Activated T-helper 1 cell treated with anti-CD3 and anti-CD28 coated beads, Interleukin-12 subunit alpha, Interleukin-12 subunit beta, Interleukin-2, Interleukin-4 antibody, amounts not matched to agents 30 ng/mL and 10 ng/mL and 1 ng/mL, durations not matched to agents 14 hours and 24 hours and 36 hours (primary cell): ENCODE measurements at regions of chr1 and their contacts with region 1.

Region 1: GRCh38 chr1:58783993-58784757 is at the start of gene JUN:
- DNase-seq: peak; percentile 98
- H3K4me3 Mint-ChIP-seq: peak within 1 kb of the TSS; percentile 96
- H3K27ac Mint-ChIP-seq: peak within 1 kb of the TSS; percentile 96
- H3K4me1 Mint-ChIP-seq: peaks cover 34% of the 10 kb centered on the region
- H3K27me3 Mint-ChIP-seq: peaks cover 4% of the 10 kb centered on the region
- total RNA-seq, gene JUN: 68.5 and 71.6 TPM in 2 replicates

Region 2: DNA sequence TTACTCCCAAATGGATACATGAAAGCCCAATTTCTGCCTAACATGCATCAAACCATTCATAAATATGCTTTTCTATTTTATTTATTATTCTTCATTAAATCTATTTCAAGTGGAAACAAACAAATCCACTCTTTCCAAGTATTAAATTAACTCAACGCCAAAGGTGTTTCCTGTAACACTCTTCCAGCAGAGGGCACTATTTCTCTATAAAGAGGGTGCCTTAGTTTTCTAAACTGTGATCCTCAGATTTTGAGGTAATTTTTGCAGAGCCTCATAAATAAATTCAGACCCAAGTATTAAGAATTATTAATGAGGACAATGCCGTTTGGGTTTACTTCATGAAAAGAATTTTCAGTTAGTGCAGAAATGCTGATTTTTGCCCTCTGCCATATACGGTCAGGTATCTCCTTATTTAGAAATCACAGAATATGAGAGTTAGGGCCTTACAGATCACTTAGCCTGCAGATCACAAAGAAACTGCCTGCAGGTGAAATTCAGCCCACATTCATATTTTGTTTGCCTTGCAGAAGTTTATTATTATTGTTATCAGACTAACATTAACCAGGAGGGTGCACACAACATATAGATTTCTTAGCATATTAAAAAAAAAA is 44.2 kb before region 1 on chr1:
- intact Hi-C with region 1: loop called (anchors 1 kb)
- DNase-seq: no peak
- H3K4me3 Mint-ChIP-seq: no peak overlapping the region
- H3K27ac Mint-ChIP-seq: no peak overlapping the region
- H3K4me1 Mint-ChIP-seq: peaks cover 18% of the 10 kb centered on the region
- H3K27me3 Mint-ChIP-seq: peaks cover 7% of the 10 kb centered on the region

Region 3: DNA sequence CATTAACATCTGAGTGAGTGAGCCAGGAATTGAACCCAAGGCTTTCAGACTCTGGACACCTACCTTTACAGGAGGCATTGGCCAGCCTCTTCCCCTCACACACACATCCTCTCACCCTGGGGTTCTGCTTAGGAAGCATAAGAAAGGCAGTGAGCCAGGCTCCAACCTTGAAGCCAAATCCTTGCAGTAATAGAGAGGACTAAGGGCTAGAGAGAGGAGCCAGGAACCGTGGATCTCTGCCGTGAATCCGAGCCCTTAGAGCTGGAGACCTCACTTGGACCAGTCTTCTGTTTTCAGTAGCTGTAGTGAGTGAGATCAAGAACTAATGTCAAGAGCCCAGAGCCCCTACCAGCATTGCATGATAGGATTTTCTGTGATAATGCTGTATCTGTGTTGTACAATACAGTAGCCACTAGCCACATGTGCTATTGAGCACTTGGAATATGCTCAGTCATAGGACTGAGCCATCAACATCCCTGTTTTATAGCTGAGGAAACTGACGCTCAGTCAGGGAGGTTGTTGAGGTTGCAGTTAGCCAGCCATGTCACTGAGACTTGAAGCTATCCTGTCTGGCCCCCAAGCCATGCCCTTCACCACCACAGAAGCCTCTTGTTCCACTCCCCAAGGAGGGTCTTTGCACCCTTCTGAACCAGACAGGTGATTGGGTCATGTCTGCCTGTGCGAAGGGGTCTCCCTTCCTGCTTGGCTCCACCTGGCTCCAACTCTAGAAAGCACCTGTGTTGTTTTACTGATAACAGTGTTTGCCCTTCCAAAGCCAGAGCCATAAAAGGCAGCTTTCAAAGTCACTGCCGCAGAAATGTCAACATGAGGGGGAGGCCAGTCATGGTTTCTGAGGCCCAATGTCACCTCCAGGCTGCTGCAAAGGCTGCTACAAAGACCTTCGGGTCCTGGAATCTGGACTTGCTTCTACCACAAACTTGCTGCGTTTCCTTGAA is 100.8 kb after region 1 on chr1:
- intact Hi-C with region 1: loop called (anchors 5 kb)
- DNase-seq: peak; percentile 3
- H3K4me3 Mint-ChIP-seq: peak overlapping the region; percentile 65
- H3K27ac Mint-ChIP-seq: peak overlapping the region; percentile 78
- H3K4me1 Mint-ChIP-seq: peaks cover 70% of the 10 kb centered on the region
- H3K27me3 Mint-ChIP-seq: peaks cover 5% of the 10 kb centered on the region

Region 4: GRCh38 chr1:59020151-59020997 is 236.2 kb after region 1 on chr1:
- intact Hi-C with region 1: loop called (anchors 1 kb)
- DNase-seq: peak; percentile 51
- H3K4me3 Mint-ChIP-seq: peak overlapping the region; percentile 78
- H3K27ac Mint-ChIP-seq: peak overlapping the region; percentile 94
- H3K4me1 Mint-ChIP-seq: peaks cover 68% of the 10 kb centered on the region
- H3K27me3 Mint-ChIP-seq: no peaks in the 10 kb centered on the region

Region 5: DNA sequence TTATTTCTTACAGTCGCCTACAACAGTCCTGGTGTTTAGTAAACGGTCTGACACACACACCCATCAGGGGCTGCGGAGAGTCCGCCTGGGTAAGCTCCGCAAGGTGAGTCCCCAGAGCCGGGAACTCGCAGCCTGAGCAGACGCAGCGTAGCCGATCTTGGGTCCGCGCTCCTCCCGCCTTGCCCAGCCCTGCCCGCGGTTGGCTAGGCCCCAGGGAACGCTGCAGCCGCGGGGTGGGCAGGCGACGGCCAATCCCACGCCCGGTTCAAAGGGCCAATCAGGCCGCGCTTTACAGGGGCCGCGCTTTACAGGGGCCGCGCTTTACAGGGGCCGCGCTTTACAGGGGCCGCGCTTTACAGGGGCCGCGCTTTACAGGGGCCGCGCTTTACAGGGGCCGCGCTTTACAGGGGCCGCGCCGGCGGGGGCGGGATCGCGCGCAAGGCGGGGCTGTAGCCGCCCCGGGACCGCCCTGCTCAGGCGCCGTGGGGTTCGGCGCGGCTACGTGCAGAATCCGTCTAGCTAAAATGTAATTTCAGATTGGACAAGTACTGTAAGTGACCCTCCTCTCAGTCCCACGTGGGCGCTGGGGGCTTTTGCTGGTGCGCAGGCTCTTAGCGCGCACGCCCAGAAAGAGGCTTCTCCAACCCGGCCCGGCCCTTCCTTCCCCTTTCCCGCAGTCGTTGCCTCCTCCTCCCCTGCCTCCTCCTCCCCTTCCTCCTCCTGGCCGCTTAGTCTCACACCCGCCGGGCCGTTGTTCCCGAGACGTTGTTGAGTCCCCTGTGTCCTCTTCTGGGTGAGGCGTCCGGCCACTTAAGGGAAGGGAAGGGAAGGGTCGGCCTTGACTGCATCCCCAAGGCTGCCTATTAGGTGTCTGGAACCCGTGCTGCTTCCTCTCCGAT is 512.4 kb after region 1 on chr1 and contains the start of gene FGGY:
- intact Hi-C with region 1: loop called (anchors 1 kb)
- DNase-seq: peak; percentile 86
- H3K4me3 Mint-ChIP-seq: peak within 1 kb of the TSS; percentile 91
- H3K27ac Mint-ChIP-seq: peak within 1 kb of the TSS; percentile 91
- H3K4me1 Mint-ChIP-seq: peaks cover 48% of the 10 kb centered on the region
- H3K27me3 Mint-ChIP-seq: no peaks in the 10 kb centered on the region
- total RNA-seq, gene FGGY: 7.1 and 8.2 TPM in 2 replicates

Region 6: DNA sequence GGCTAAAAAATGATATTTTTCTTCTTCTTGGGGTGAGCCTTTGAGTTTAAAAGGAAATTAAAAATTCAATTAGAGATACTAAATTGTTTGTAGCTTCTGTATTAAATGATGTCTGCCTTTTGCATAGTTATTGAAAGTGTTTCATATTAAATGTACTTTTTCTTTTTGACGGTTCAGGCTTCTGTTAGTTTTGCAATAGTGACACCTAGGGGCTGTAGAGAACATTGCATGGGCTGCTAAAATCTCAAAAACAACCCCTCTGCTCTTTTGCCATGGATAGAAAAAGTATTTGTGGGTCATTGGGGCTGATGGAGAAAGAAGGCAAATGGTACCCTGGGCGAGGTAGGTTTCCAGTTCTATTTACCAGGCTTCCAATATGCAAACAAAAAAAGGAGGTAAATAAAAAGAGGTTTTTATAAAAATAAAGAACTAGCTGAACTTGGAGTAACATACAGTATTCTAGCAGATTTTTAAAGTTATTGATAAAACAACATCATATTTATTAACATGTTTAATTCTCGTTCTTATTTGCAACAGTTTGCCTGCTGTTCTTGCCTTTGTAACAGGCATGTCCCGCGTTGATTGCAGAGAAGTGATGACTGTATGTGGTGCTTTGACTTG is 915.2 kb after region 1 on chr1:
- intact Hi-C with region 1: loop called (anchors 1 kb)
- DNase-seq: no peak
- H3K4me3 Mint-ChIP-seq: no peak overlapping the region
- H3K27ac Mint-ChIP-seq: no peak overlapping the region
- H3K4me1 Mint-ChIP-seq: peaks cover 33% of the 10 kb centered on the region
- H3K27me3 Mint-ChIP-seq: no peaks in the 10 kb centered on the region